Activated naive CD4-positive, alpha-beta T cell treated with anti-CD3 and anti-CD28 coated beads, Interleukin-2, amount 10 ng/mL, durations not matched to agents 7 days and 5 days (primary cell): ENCODE measurements at regions of chr16 and their contacts with region 1.

Region 1: GRCh38 chr16:11356573-11357331 is 11.5 kb downstream of the RMI2 start:
- DNase-seq: peak; percentile 73
- H3K4me3 Mint-ChIP-seq: peak overlapping the region; percentile 62
- H3K27ac Mint-ChIP-seq: peak overlapping the region; percentile 96
- H3K4me1 Mint-ChIP-seq: peaks cover 91% of the 10 kb centered on the region
- H3K27me3 Mint-ChIP-seq: peaks cover 47% of the 10 kb centered on the region

Region 2: DNA sequence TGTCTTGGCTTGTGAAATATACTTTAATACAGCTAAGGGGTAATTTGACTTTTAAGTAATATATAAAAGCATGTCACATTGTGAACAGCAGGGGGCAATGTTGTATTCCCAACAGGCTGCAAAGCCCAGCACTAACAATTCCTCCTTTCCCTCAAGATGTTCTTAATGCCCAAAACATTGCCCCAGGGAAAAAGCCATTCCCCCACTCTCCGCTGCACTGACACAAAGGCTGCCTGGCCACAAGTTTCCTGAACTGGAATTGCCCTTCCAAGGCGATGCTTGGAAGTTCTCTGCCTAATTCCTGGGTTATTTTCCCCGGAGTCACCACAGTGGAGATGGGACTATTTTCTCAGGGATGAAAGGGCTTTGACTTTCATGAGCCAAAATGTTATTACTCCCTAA is 385.2 kb before region 1 on chr16:
- CTCF ChIA-PET with region 1: interaction called, 10 read pairs
- DNase-seq: peak; percentile 51
- H3K4me3 Mint-ChIP-seq: no peak overlapping the region
- H3K27ac Mint-ChIP-seq: peak overlapping the region; percentile 35
- H3K4me1 Mint-ChIP-seq: peaks cover 77% of the 10 kb centered on the region
- H3K27me3 Mint-ChIP-seq: no peaks in the 10 kb centered on the region

Region 3: GRCh38 chr16:11155284-11155806 is 201.4 kb before region 1 on chr16:
- CTCF ChIA-PET with region 1: no interaction called
- DNase-seq: no peak
- H3K4me3 Mint-ChIP-seq: no peak overlapping the region
- H3K27ac Mint-ChIP-seq: no peak overlapping the region
- H3K4me1 Mint-ChIP-seq: peaks cover 73% of the 10 kb centered on the region
- H3K27me3 Mint-ChIP-seq: peaks cover 3% of the 10 kb centered on the region

Region 4: GRCh38 chr16:11310997-11311561 is 45.7 kb before region 1 on chr16:
- CTCF ChIA-PET with region 1: interaction called, 20 read pairs
- DNase-seq: peak; percentile 82
- H3K4me3 Mint-ChIP-seq: peak overlapping the region; percentile 2
- H3K27ac Mint-ChIP-seq: peak overlapping the region; percentile 93
- H3K4me1 Mint-ChIP-seq: peaks cover 84% of the 10 kb centered on the region
- H3K27me3 Mint-ChIP-seq: no peaks in the 10 kb centered on the region

Region 5: DNA sequence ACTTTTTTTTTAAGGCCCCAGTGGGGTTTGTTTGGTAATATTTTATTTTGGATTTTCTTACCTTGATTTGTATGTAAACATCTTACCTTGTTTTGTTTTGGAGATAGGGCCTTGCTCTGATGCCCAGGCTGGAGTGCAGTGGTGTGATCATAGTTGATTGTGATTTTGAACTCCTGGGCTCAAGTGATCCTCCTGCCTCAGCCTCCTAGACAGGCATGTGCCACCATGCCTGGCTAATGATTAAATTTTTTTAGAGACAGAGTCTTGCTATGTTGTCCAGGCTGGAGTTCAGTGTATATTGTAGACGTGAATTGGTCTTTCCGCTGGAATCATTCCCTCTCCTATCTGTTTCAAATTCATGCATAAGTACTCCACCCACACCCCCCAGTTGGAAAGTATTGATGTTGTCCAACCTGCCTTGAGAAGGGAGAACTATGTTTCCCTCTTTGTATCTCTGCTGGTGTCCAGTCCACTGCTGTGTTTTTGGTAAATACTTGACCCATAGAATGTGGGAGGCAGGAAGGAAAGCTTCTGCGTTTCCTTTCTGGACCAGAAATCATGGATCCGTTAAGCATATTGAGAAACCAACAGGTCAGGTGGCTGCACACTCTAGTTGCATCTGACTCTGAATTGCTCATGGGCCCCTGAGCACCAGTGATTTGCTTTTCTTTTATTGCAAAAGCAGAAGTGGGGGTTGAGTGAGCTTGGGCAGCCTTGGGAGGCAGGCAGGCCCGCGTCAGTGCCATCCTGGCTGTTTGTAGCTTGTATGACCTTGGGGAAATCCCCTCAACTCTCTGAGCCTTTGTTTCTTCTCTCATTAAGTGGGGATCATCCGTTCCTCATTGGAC is 13.6 kb after region 1 on chr16:
- CTCF ChIA-PET with region 1: interaction called, 20 read pairs
- DNase-seq: peak; percentile 34
- H3K4me3 Mint-ChIP-seq: no peak overlapping the region
- H3K27ac Mint-ChIP-seq: no peak overlapping the region
- H3K4me1 Mint-ChIP-seq: peaks cover 22% of the 10 kb centered on the region
- H3K27me3 Mint-ChIP-seq: peaks cover 20% of the 10 kb centered on the region